ENCODE measurements at regions of chr2 and their contacts with region 1.

Region 1: GRCh38 chr2:109382951-109383350 is 230.8 kb downstream of the SEPTIN10 start:
- DNase-seq: peak; percentile 59 to 81
- ATAC-seq: peak; percentile 56 to 76 (median 67)
- H3K4me3 ChIP-seq: no peak overlapping the region
- H3K27ac ChIP-seq: peak overlapping the region; percentile 39
- H3K4me1 ChIP-seq: peaks cover 44% of the 10 kb centered on the region
- H3K27me3 ChIP-seq: no peaks in the 10 kb centered on the region
- CTCF ChIP-seq: no peak

Region 2: DNA sequence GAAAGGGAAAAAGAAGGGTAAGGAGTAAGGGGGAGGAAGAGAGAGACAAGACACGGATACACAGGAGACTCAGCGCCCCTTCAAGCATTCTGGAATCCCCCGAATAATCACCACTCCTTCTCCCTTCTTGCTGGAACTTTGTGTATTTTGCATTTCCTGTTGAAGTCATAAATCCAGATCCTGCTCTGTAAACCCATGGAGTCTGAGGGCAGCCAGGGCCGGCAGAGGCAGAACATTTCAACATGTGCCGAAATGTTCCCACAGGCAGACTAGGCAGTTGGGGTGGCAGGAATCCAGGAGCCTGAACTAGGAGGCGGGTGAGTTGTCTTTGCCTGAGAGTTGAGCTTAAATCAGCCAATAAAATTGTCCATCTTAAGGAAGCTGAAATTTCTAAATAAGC is 60.8 kb before region 1 on chr2:
- intact Hi-C with region 1: loop called in 1 of 2 experiments (anchors 5 kb)
- DNase-seq: peak; percentile 90 to 95
- ATAC-seq: peak; percentile 58 to 77 (median 66)
- H3K4me3 ChIP-seq: no peak overlapping the region
- H3K27ac ChIP-seq: peak overlapping the region; percentile 65
- H3K4me1 ChIP-seq: peaks cover 66% of the 10 kb centered on the region
- H3K27me3 ChIP-seq: no peaks in the 10 kb centered on the region
- CTCF ChIP-seq: no peak

Region 3: GRCh38 chr2:109419960-109420370 is 37.0 kb after region 1 on chr2:
- intact Hi-C with region 1: loop called in 1 of 2 experiments (anchors 5 kb)
- DNase-seq: peak; percentile 42 to 71
- ATAC-seq: peak; percentile 55 to 76 (median 64)
- H3K4me3 ChIP-seq: no peak overlapping the region
- H3K27ac ChIP-seq: peak overlapping the region; percentile 39
- H3K4me1 ChIP-seq: peaks cover 24% of the 10 kb centered on the region
- H3K27me3 ChIP-seq: no peaks in the 10 kb centered on the region
- CTCF ChIP-seq: no peak

Region 4: DNA sequence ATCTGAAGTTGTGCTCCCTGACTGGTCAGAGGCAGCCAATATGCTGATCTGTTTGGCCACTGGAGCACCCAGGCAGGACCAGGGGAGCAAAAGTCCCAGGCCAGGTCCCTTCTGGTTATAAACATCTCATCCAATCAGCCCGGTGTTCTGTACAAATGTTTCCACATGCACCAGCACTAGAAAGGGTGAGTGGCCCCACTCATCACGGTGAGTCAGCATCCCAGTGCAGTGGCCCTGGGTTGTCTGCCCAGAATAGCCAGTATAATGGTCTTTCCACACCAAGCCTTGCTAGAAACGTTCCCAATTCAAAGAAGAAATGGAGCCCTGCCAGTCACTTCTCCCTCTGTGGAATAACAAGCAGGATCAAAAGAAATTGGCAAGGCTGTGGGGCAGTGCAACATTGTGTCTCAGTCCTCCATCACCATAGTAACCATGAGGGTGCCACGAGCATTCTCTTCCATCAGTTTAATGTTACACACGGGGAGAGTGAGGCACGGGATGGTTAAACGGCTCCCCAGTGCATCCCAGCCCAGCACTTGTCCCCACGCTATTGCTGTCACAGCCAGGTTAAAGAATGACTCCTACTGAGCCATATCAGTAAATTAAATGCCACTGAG is 55.9 kb after region 1 on chr2:
- intact Hi-C with region 1: loop called in 1 of 2 experiments (anchors 5 kb)
- DNase-seq: peak; percentile 63 to 74
- ATAC-seq: peak; percentile 43 to 74 (median 64)
- H3K4me3 ChIP-seq: no peak overlapping the region
- H3K27ac ChIP-seq: peak overlapping the region; percentile 64
- H3K4me1 ChIP-seq: peaks cover 43% of the 10 kb centered on the region
- H3K27me3 ChIP-seq: no peaks in the 10 kb centered on the region
- CTCF ChIP-seq: no peak

Region 5: DNA sequence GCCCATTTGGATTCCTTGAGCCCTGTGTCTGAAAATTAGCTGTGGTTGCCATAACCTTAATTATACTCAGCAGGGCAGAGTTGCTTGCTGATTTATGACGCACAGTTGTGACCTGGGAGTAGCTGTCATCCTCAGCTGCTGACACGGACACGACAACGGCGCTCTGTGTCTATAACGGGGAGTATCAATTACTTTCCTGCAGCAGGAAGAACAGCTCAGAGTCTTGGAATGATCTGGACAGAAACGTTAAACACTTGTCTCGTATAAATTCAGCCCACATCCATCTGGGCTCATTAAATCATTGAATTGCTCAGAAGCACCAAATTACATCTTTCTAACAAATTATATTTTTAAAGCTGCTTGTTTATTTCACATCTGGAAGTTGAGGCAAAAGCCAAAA is 114.5 kb after region 1 on chr2:
- intact Hi-C with region 1: loop called in 1 of 2 experiments (anchors 5 kb)
- DNase-seq: peak in 1 of 2 donors; percentile 75
- ATAC-seq: peak; percentile 78 to 81 (median 80)
- H3K4me3 ChIP-seq: peak overlapping the region; percentile 36
- H3K27ac ChIP-seq: peak overlapping the region; percentile 81
- H3K4me1 ChIP-seq: peaks cover 26% of the 10 kb centered on the region
- H3K27me3 ChIP-seq: no peaks in the 10 kb centered on the region
- CTCF ChIP-seq: no peak

Measured in psoas muscle (tissue), 8 donors.